MCF 10A (cell line): ENCODE measurements at regions of chr16 and their contacts with region 1.

Region 1: GRCh38 chr16:66660422-66661209 is 35.9 kb downstream of the CMTM4 start:
- DNase-seq: peak; percentile 74
- H3K4me3 Mint-ChIP-seq: peak overlapping the region; percentile 34
- H3K27ac Mint-ChIP-seq: peak overlapping the region; percentile 78
- H3K4me1 Mint-ChIP-seq: peaks cover 25% of the 10 kb centered on the region
- H3K27me3 Mint-ChIP-seq: no peaks in the 10 kb centered on the region
- CTCF ChIP-seq: no peak

Region 2: DNA sequence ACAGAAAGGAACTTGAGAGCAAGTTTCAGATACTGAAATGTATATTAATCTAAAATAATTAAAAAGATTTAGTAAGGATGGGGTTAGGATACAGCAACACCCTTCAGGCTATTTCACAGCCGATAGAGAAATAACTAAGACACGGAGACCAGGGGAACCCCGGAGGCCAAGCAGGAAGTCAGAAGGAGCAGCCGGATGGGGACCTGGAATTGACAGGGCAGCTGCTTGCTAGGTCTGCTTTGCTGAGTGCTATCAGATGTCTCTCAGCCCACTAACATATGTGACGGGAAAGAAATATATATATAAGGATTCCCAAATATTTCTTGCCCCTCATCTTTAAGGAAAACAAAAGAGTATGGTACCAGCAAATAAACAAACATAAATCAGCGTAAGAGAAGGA is 448.2 kb before region 1 on chr16:
- CTCF ChIA-PET with region 1: no interaction called
- POLR2A ChIA-PET with region 1: no interaction called
- intact Hi-C with region 1: no loop called
- DNase-seq: no peak
- H3K4me3 Mint-ChIP-seq: no peak overlapping the region
- H3K27ac Mint-ChIP-seq: no peak overlapping the region
- H3K4me1 Mint-ChIP-seq: no peaks in the 10 kb centered on the region
- H3K27me3 Mint-ChIP-seq: no peaks in the 10 kb centered on the region
- CTCF ChIP-seq: no peak

Region 3: DNA sequence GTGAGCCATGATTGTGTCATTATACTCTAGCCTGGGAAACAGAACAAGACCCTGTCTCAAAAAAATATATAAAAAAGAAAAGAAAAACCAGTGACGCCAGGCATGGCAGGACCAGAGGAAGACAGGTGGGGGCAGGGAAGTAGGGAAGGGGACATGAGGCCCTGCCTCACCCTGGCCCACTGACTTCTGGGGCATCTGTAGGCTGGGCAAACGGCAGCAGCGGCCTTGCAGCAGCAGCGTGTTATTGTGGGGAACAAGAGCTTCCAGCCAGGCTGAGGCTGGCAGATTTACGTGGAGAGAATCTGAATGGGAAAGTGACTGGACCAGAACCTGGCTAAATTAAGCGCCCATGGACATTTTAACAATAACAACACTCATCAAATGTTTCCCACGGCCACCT is 16.6 kb after region 1 on chr16:
- CTCF ChIA-PET with region 1: interaction called, 33 read pairs
- POLR2A ChIA-PET with region 1: interaction called, 4 read pairs
- intact Hi-C with region 1: no loop called
- DNase-seq: no peak
- H3K4me3 Mint-ChIP-seq: no peak overlapping the region
- H3K27ac Mint-ChIP-seq: no peak overlapping the region
- H3K4me1 Mint-ChIP-seq: peaks cover 7% of the 10 kb centered on the region
- H3K27me3 Mint-ChIP-seq: no peaks in the 10 kb centered on the region
- CTCF ChIP-seq: no peak

Region 4: GRCh38 chr16:66687906-66688625 is 27.4 kb after region 1 on chr16:
- CTCF ChIA-PET with region 1: interaction called, 69 read pairs
- POLR2A ChIA-PET with region 1: interaction called, 3 read pairs
- intact Hi-C with region 1: no loop called
- DNase-seq: no peak
- H3K4me3 Mint-ChIP-seq: no peak overlapping the region
- H3K27ac Mint-ChIP-seq: no peak overlapping the region
- H3K4me1 Mint-ChIP-seq: peaks cover 11% of the 10 kb centered on the region
- H3K27me3 Mint-ChIP-seq: no peaks in the 10 kb centered on the region
- CTCF ChIP-seq: no peak

Region 5: DNA sequence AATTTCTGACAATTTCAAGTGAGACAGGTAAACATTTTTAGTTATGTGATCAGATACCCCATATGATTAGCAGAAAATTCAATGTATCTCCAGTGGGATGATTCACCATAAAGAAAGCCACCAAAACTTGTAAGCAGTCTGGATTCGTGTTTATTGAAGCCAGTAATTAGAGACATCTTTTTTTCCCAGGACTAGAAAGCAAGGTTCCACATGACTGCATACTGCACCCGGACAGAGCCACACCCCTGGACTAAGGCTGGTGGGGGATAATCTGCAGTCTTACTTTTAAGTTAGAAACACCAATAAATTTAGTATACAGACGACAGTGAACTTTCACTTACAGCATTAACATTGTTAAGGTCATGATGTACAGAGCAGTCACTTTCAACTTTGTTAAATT is 60.1 kb after region 1 on chr16:
- CTCF ChIA-PET with region 1: interaction called, 68 read pairs
- POLR2A ChIA-PET with region 1: interaction called, 3 read pairs
- intact Hi-C with region 1: no loop called
- DNase-seq: no peak
- H3K4me3 Mint-ChIP-seq: no peak overlapping the region
- H3K27ac Mint-ChIP-seq: peak overlapping the region; percentile 23
- H3K4me1 Mint-ChIP-seq: no peaks in the 10 kb centered on the region
- H3K27me3 Mint-ChIP-seq: no peaks in the 10 kb centered on the region
- CTCF ChIP-seq: no peak

Region 6: DNA sequence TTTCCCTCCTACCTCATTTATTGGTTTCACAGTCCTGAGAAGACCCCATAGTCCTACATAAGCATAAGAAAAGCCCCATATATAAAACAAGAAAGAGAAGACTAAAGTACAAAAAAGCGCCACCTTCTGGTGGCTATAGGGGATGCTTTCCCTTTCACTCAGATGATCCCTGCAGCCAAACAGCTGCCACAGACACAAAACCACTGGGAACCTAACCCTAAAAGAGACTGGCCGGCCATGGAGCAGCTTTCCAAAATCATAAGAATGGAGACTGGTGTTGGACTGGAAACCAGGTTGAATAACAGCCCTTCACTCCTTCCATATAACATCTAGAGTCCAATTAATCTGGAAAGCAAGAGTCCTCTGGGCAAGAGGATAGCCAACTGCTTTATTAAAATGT is 79.4 kb after region 1 on chr16:
- CTCF ChIA-PET with region 1: interaction called, 17 read pairs
- POLR2A ChIA-PET with region 1: interaction called, 8 read pairs
- intact Hi-C with region 1: loop called (anchors 2 kb)
- DNase-seq: peak; percentile 56
- H3K4me3 Mint-ChIP-seq: no peak overlapping the region
- H3K27ac Mint-ChIP-seq: peak overlapping the region; percentile 66
- H3K4me1 Mint-ChIP-seq: peaks cover 32% of the 10 kb centered on the region
- H3K27me3 Mint-ChIP-seq: no peaks in the 10 kb centered on the region
- CTCF ChIP-seq: peak; percentile 58

Region 7: GRCh38 chr16:66844342-66845079 is 183.9 kb after region 1 on chr16 and contains the start of gene CA7:
- CTCF ChIA-PET with region 1: no interaction called
- POLR2A ChIA-PET with region 1: no interaction called
- intact Hi-C with region 1: no loop called
- DNase-seq: no peak
- H3K4me3 Mint-ChIP-seq: no peak within 1 kb of the TSS
- H3K27ac Mint-ChIP-seq: no peak within 1 kb of the TSS
- H3K4me1 Mint-ChIP-seq: peaks cover 7% of the 10 kb centered on the region
- H3K27me3 Mint-ChIP-seq: peaks cover 11% of the 10 kb centered on the region
- CTCF ChIP-seq: no peak
- total RNA-seq, gene CA7: not detected in 2 replicates